Panc1 (cell line): ENCODE measurements at regions of chr11 and their contacts with region 1.

Region 1: GRCh38 chr11:74487875-74488274 is 5.6 kb downstream of the LIPT2 start:
- DNase-seq: no peak
- ATAC-seq: no peak
- H3K4me3 ChIP-seq: no peak overlapping the region
- H3K27ac ChIP-seq: no peak overlapping the region
- H3K4me1 ChIP-seq: peaks cover 5% of the 10 kb centered on the region
- H3K27me3 ChIP-seq: no peaks in the 10 kb centered on the region; the same call in 1 of the 2 replicates
- CTCF ChIP-seq: peak; percentile 59

Region 2: DNA sequence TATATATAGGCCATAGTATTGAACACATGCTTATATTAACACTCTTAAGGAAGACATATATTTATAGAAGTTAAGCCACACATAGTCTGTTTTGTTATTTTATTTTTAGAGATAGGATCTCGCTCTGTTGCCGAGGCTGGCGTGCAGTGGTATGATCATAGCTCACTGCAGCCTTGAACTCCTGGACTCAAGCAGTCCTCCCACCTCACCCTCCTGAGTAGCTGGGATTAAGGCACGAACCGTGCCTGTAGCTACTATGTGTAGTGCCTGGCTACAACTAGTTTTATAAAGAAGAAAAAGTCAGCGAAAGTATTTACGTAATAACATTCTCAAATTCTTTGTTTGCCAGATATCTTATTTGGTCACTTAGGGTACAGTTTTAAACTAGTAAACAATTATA is 499.6 kb before region 1 on chr11:
- CTCF ChIA-PET with region 1: no interaction called
- POLR2A ChIA-PET with region 1: interaction called, 11 read pairs
- in situ Hi-C with region 1: no loop called
- intact Hi-C with region 1: no loop called
- DNase-seq: no peak
- ATAC-seq: no peak
- H3K4me3 ChIP-seq: no peak overlapping the region
- H3K27ac ChIP-seq: no peak overlapping the region
- H3K4me1 ChIP-seq: peaks cover 11% of the 10 kb centered on the region
- H3K27me3 ChIP-seq: no peaks in the 10 kb centered on the region
- CTCF ChIP-seq: no peak

Region 3: DNA sequence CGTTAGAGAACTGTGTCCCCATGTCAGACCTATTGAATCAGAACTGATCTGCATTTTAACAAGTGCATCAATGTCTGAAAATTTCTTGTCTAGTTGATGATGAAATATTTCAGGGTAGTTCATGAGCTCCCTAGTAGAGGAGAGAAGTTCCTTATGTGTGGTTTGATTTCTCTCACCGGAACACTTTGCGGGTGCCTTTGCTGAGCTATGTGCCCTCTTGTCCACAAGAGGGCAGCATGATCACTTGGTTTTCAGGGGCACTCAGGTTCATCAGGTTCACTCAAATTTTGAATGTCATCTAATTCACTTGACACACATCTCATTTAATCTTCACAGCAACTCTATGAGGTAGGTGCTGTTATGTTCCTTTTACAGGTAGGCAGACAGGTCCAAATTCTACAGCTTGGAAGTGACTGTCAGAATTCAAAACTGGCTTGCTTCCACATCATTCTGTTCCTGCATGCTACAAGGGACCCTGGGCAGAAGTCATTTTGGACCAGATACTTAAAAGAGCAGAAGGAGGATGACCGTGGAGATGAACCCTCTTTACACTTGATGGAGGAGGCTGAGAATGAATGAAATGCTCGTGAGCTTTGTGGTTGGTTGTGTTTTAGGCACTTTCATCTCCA is 232.0 kb before region 1 on chr11:
- CTCF ChIA-PET with region 1: no interaction called
- POLR2A ChIA-PET with region 1: no interaction called
- in situ Hi-C with region 1: no loop called
- intact Hi-C with region 1: no loop called
- DNase-seq: peak; percentile 71
- ATAC-seq: peak; percentile 76
- H3K4me3 ChIP-seq: no peak overlapping the region
- H3K27ac ChIP-seq: no peak overlapping the region
- H3K4me1 ChIP-seq: no peaks in the 10 kb centered on the region
- H3K27me3 ChIP-seq: no peaks in the 10 kb centered on the region
- CTCF ChIP-seq: peak; percentile 95